ENCODE measurements at regions of chr9 and their contacts with region 1.

Region 1: GRCh38 chr9:77648234-77649120 is at the start of gene GNA14:
- DNase-seq: peak; percentile 82
- H3K4me3 ChIP-seq: peak within 1 kb of the TSS; percentile 49 to 69 (median 56)
- H3K27ac ChIP-seq: peak within 1 kb of the TSS; percentile 61 to 78 (median 68)
- H3K4me1 ChIP-seq: peaks cover 0 to 46% (median 26%) of the 10 kb centered on the region in 4 donors
- H3K27me3 ChIP-seq: peaks cover 0 to 20% (median 0%) of the 10 kb centered on the region in 3 donors
- CTCF ChIP-seq: no peak
- EP300 ChIP-seq: no peak
- POLR2A ChIP-seq: no peak
- total RNA-seq, gene GNA14: 5.0 to 29.2 (median 10.0) TPM

Region 2: GRCh38 chr9:77456829-77457437 is 191.5 kb before region 1 on chr9:
- intact Hi-C with region 1: loop called (anchors 5 kb)
- DNase-seq: peak; percentile 92
- H3K4me3 ChIP-seq: no peak overlapping the region
- H3K27ac ChIP-seq: peak overlapping the region in 1 of 4 donors; percentile 49
- H3K4me1 ChIP-seq: peaks cover 0 to 16% (median 11%) of the 10 kb centered on the region in 4 donors
- H3K27me3 ChIP-seq: no peaks in the 10 kb centered on the region
- CTCF ChIP-seq: peak; percentile 55 to 91 (median 81)
- EP300 ChIP-seq: no peak
- POLR2A ChIP-seq: no peak

Region 3: DNA sequence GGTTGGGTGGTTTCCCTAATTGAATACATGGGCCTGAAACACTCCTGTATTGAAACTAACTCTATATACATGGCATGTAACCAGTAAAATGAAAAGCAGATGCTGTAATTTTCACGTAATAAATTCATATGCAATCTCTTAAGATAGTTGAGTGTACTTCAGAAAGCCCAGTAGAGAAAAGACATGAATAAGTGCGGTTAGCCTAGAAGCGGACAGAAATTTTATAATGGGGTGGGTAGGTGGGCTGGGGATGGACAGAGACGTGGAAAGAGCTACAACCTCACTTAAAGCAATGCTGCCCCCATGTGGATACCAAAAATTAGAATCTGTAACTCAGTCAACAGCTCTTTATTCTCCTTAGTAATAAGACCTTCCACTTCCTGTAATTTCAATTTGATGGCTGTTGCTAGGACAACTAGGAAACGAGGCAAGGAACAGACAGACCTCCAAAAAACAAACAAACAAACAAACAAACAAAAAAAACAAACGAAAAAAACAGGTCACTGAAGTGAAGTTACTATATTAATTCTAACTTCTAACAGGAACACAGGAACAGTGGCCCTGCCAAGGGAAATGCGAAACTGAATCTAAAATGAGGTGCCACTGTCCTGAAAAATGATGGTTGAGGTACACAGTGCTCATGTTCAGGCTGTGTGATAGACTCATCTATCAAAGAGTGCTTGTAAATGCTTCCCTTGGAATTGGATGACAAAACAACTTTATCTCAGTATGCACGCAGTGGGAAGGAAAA is 103.0 kb after region 1 on chr9:
- intact Hi-C with region 1: loop called (anchors 5 kb)
- DNase-seq: no peak
- H3K4me3 ChIP-seq: peak overlapping the region in 1 of 4 donors; percentile 5
- H3K27ac ChIP-seq: peak overlapping the region; percentile 15 to 68 (median 64)
- H3K4me1 ChIP-seq: peaks cover 0 to 55% (median 45%) of the 10 kb centered on the region in 4 donors
- H3K27me3 ChIP-seq: no peaks in the 10 kb centered on the region
- CTCF ChIP-seq: peak; percentile 42 to 59 (median 48)
- EP300 ChIP-seq: no peak
- POLR2A ChIP-seq: no peak

Measured in sigmoid colon (tissue), 7 donors.